ENCODE measurements at regions of chr20 and their contacts with region 1.

Region 1: GRCh38 chr20:50464026-50464724 is 46.0 kb upstream of the PTPN1 start:
- DNase-seq: peak; percentile 36 to 74 (median 49)
- H3K4me3 ChIP-seq: no peak overlapping the region
- H3K4me3 Mint-ChIP-seq: peak overlapping the region in 1 of 7 donors; percentile 46
- H3K27ac ChIP-seq: no peak overlapping the region
- H3K27ac Mint-ChIP-seq: peak overlapping the region in 1 of 8 donors; percentile 38
- H3K4me1 ChIP-seq: peaks cover 14% of the 10 kb centered on the region
- H3K4me1 Mint-ChIP-seq: peaks cover 2 to 8% (median 5%) of the 10 kb centered on the region in 3 donors
- H3K27me3 ChIP-seq: peaks cover 3% of the 10 kb centered on the region
- H3K27me3 Mint-ChIP-seq: peaks cover 0 to 2% of the 10 kb centered on the region in 2 donors

Region 2: DNA sequence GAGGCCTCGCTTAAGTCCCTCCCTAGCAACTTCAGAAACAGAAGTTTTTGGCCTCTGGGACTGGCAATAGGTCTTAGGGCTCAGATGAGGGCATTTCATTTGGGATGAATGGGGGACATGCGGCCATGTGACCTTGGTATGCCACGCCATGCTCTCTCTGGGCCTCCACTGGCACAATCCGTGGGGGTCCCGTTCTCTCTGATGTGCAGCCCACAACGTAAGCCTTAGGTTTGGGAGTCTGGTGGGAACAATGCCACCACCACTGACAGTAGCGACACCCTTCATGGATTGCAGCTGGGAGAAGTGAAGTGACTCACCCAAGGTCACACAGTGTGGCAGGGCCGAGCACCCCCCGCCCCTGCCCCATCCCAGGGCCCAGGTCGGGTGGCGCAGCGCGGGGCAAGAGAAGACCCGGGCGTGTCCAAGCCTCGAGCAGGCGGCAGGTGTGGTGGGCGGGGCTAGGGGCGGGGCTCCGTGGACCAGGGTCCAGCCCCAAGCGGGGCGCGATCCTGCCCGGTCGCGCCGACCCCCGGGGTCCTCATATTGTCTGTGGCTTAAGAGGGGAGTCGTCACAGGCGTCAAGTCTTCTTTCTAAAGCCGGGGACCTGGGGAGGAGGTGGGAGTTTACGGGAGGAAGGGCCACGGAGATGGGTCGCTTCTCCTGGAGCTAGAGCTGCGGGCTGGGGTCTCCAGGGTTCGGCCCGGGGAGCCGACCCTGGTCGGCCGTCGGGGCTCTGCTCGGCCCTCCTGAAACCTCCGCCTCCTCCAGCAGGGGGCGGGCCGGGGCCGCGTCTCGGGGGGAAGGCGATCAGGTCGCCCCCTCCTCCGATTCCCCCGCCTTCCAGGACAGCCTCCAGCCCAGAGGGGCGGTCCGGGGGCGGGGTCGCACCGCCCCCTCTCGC is 274.2 kb before region 1 on chr20:
- CTCF ChIA-PET with region 1: interaction called, 65 read pairs
- POLR2A ChIA-PET with region 1: interaction called, 8 read pairs
- DNase-seq: peak; percentile 73 to 90 (median 80)
- H3K4me3 ChIP-seq: no peak overlapping the region
- H3K4me3 Mint-ChIP-seq: peak overlapping the region; percentile 64 to 77 (median 66)
- H3K27ac ChIP-seq: peak overlapping the region; percentile 85
- H3K27ac Mint-ChIP-seq: peak overlapping the region in 7 of 8 donors; percentile 15 to 87 (median 50)
- H3K4me1 ChIP-seq: peaks cover 22% of the 10 kb centered on the region
- H3K4me1 Mint-ChIP-seq: peaks cover 28 to 35% (median 28%) of the 10 kb centered on the region in 3 donors
- H3K27me3 ChIP-seq: no peaks in the 10 kb centered on the region
- H3K27me3 Mint-ChIP-seq: peaks cover 4 to 11% of the 10 kb centered on the region in 2 donors

Region 3: DNA sequence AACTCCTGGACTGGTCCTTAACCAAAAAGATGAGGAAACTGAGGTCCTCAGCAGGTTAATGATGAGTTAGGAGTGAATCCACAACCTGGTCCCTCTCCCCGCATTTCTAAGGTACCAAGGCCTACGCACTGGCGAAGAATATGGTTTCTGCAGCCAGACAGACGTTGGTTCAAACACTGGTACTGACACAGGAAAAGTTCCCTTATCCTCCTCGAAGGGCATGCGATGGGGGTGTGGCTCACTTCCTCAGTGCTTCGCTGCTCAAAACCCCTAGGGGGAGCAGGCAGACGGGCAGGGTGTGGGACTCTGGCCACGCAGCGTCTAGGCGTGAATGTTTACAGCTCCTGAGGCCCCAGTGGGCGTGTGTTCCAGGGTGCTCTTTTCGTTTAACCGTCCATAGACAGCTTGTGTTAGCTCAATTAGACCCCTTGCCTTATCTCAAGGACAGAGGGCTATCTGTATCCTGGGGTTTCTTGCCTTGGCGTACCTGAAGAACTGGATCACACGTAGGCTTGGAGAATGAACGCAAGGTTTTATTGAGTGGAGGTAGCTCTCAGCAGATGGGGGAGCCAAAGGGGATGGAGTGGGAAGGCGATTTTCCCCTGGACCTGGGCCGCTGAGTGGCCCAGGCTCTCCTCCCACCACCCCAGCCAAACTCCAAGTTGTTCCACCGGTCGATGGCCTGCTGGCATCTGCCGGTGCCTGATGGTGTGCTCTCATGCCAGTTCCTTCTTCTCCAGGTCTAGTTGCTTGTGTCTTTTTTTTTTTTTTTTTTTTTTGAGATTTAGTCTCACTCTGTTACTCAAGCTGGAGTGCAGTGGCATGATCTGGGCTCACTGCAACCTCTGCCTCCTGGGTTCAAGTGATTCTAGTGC is 14.2 kb after region 1 on chr20:
- CTCF ChIA-PET with region 1: interaction called, 11 read pairs
- POLR2A ChIA-PET with region 1: no interaction called
- DNase-seq: peak; percentile 55 to 82 (median 59)
- H3K4me3 ChIP-seq: no peak overlapping the region
- H3K4me3 Mint-ChIP-seq: peak overlapping the region in 3 of 7 donors; percentile 45 to 65 (median 61)
- H3K27ac ChIP-seq: no peak overlapping the region
- H3K27ac Mint-ChIP-seq: peak overlapping the region in 3 of 8 donors; percentile 38 to 88 (median 41)
- H3K4me1 ChIP-seq: peaks cover 15% of the 10 kb centered on the region
- H3K4me1 Mint-ChIP-seq: peaks cover 11 to 25% (median 17%) of the 10 kb centered on the region in 3 donors
- H3K27me3 ChIP-seq: no peaks in the 10 kb centered on the region
- H3K27me3 Mint-ChIP-seq: peaks cover under 1 to 2% of the 10 kb centered on the region in 2 donors